GM12878 (cell line): ENCODE measurements at regions of chr17 and their contacts with region 1.

Region 1: DNA sequence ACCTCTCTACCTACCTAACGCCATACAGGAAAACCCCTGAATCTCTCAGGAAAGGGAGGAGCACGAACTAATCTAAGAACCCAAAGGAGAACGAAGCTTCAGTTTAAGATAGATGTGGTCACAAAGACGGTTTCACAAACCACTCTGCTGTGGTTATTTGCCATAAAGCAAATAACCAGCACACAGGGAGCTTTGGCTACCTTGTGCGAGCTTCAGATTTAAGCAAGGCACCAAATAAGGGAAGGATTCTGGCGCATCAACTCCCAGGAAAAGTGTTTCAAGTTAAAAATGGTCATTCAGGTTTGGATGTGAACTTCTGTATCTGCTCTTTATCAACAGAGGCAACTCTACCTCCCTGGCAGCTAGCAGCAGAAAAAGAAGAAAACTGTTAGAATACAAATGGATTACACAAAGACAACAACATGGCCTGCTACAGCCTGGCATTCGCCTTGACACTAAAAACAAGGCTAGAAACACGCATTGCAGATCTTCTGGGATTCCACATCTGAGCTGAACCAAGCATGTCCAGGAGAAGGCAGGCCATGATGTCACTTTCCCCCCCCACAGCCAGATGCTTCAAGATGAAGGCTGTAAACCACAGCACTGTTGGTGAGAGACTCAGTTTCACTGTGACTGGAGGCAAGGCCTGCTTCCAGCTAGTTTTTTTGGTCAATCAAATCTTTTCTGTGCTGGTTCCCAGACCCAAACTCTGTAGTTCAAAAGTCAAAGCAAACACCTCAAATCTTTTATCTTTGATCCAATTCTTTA is 43.6 kb downstream of the SMG6 start:
- DNase-seq: peak; percentile 85
- ATAC-seq: peak; percentile 91
- H3K4me3 ChIP-seq: peak overlapping the region; percentile 44; the same call in 1 of the 2 replicates
- H3K27ac ChIP-seq: peak overlapping the region; percentile 99
- H3K4me1 ChIP-seq: peaks cover 64% of the 10 kb centered on the region
- H3K27me3 ChIP-seq: no peaks in the 10 kb centered on the region
- CTCF ChIP-seq: no peak
- EP300 ChIP-seq: peak; percentile 67 to 80
- POLR2A ChIP-seq: peak; percentile 61
- RAD21 ChIP-seq: no peak

Region 2: GRCh38 chr17:2238432-2239169 is 21.4 kb before region 1 on chr17:
- CTCF ChIA-PET with region 1: interaction called, 50 read pairs
- POLR2A ChIA-PET with region 1: interaction called, 21 read pairs
- RAD21 ChIA-PET with region 1: interaction called, 27 read pairs
- SMC1A ChIA-PET with region 1: interaction called, 43 read pairs
- in situ Hi-C with region 1: no loop called
- intact Hi-C with region 1: no loop called
- DNase-seq: peak; percentile 86
- ATAC-seq: peak; percentile 88
- H3K4me3 ChIP-seq: peak overlapping the region; percentile 45; the same call in 1 of the 2 replicates
- H3K27ac ChIP-seq: peak overlapping the region; percentile 99
- H3K4me1 ChIP-seq: peaks cover 50% of the 10 kb centered on the region
- H3K27me3 ChIP-seq: no peaks in the 10 kb centered on the region
- CTCF ChIP-seq: no peak
- EP300 ChIP-seq: 0 out of 4 replicates have a peak, but pooled peaks of 1 of the 2 experiments have one; percentile 34
- POLR2A ChIP-seq: peak; percentile 62
- RAD21 ChIP-seq: no peak